ENCODE measurements at regions of chr3 and their contacts with region 1.

Region 1: GRCh38 chr3:31531992-31532586 is 636 bp upstream of the STT3B start:
- DNase-seq: peak; percentile 96 to 99 (median 98)
- ATAC-seq: peak; percentile 77 to 85
- H3K4me3 Mint-ChIP-seq: peak overlapping the region in 8 of 10 donors; percentile 90 to 100 (median 97)
- H3K27ac Mint-ChIP-seq: peak overlapping the region in 9 of 10 donors; percentile 95 to 99 (median 98)
- H3K4me1 Mint-ChIP-seq: peaks cover 5 to 28% (median 23%) of the 10 kb centered on the region in 4 donors
- H3K27me3 Mint-ChIP-seq: no peaks in the 10 kb centered on the region

Region 2: DNA sequence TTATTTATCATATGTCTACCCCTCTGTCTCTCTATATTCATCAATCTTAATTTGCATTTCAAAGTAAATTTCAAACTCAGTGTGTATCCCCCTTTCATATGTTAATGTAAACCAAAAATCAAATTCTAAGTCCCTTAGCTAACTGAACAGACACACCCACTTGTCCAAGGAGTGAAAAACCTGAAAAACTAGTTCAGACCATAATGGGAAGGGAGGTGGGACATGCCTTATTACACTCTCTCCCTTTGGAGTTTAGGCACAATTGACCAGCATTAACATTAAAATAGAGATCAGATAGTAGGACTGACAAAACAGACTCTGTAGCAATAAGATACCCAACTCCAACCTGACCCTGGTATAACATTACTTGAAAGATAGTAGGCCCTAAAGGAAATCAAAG is 390.0 kb before region 1 on chr3:
- POLR2A ChIA-PET with region 1: no interaction called
- DNase-seq: no peak
- ATAC-seq: no peak
- H3K4me3 Mint-ChIP-seq: no peak overlapping the region
- H3K27ac Mint-ChIP-seq: peak overlapping the region in 2 of 10 donors; percentile 5 to 6
- H3K4me1 Mint-ChIP-seq: no peaks in the 10 kb centered on the region
- H3K27me3 Mint-ChIP-seq: no peaks in the 10 kb centered on the region

Region 3: DNA sequence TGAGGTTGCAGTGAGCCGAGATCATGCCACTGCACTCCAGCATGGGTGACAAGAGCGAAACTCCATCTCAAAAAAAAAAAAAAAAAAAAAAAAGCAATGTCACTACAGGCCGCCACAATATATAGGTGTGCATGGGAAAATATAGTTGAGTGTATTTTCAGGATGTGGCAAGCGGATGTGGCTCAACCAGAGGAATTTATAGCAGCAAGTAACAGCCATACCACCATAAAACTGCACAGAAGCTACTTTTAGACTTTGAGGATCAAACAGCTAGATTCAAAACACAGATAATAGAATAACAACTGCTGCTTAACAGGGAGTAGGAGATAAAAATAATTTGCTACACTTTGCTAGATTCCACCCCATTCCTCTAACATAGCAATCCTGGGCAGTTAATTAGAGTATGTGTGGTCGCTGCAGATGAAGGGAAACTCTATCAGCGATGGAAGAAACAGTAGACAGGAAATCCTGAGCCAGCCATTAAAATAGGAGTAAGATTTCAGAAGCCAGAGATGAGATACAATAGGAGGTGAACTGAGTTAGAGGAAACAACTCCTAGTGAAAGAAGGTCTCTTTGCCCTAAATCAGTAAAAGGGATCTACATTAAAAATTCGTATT is 318.1 kb before region 1 on chr3:
- POLR2A ChIA-PET with region 1: interaction called, 16 read pairs
- DNase-seq: peak in 9 of 10 donors; percentile 7 to 77 (median 38)
- ATAC-seq: peak; percentile 88 to 90
- H3K4me3 Mint-ChIP-seq: peak overlapping the region; percentile 32 to 74 (median 64)
- H3K27ac Mint-ChIP-seq: peak overlapping the region in 8 of 10 donors; percentile 8 to 84 (median 54)
- H3K4me1 Mint-ChIP-seq: peaks cover 56 to 89% (median 87%) of the 10 kb centered on the region in 4 donors
- H3K27me3 Mint-ChIP-seq: no peaks in the 10 kb centered on the region

Region 4: GRCh38 chr3:31227131-31227562 is 304.9 kb before region 1 on chr3:
- POLR2A ChIA-PET with region 1: interaction called, 48 read pairs
- DNase-seq: peak in 5 of 10 donors; percentile 23 to 74 (median 42)
- ATAC-seq: peak; percentile 83
- H3K4me3 Mint-ChIP-seq: peak overlapping the region in 9 of 10 donors; percentile 54 to 83 (median 67)
- H3K27ac Mint-ChIP-seq: peak overlapping the region; percentile 77 to 97 (median 94)
- H3K4me1 Mint-ChIP-seq: peaks cover 44 to 95% (median 89%) of the 10 kb centered on the region in 4 donors
- H3K27me3 Mint-ChIP-seq: no peaks in the 10 kb centered on the region

Region 5: GRCh38 chr3:31462050-31462569 is 70.0 kb before region 1 on chr3:
- POLR2A ChIA-PET with region 1: interaction called, 108 read pairs
- DNase-seq: peak in 9 of 10 donors; percentile 22 to 89 (median 75)
- ATAC-seq: peak; percentile 87 to 93
- H3K4me3 Mint-ChIP-seq: peak overlapping the region; percentile 65 to 88 (median 74)
- H3K27ac Mint-ChIP-seq: peak overlapping the region; percentile 94 to 99 (median 96)
- H3K4me1 Mint-ChIP-seq: peaks cover 33 to 73% (median 64%) of the 10 kb centered on the region in 4 donors
- H3K27me3 Mint-ChIP-seq: no peaks in the 10 kb centered on the region

Region 6: DNA sequence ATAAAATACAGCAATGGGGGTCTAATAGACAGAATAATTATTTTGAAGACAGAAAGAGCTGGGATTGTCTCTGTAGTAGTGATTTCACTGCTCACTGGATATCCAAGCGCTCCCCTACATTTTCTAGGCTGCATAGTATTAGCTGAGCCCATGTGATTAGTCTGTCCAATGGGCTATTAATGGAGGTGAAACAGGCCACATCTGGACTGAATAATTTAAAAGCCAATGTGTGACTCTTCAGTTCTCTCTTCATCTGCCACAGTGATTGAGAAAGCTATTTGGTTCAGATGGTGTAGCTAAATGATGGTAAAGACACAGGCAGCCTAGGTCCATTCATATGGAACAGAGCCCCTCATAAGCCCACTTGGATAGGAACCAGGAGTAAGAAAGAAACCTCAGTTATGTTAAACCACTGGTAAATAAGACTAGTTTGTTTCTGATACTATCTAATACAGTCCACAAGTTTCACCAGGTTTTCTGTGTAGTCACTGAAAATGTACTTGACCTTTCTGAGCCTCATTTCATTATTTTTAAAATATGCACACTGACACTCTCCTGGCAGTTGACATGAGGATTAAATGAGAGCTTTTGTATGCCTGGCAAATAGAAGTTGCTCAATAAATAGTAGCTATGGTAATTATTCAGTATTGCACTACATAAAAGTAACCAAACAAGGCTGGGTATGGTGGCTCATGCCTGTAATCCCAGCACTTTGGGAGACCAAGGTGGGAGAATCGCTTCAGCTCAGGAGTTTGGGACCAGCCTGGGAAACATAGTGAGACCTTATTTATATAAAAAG is 16.4 kb before region 1 on chr3:
- POLR2A ChIA-PET with region 1: interaction called, 33 read pairs
- DNase-seq: no peak
- ATAC-seq: no peak
- H3K4me3 Mint-ChIP-seq: no peak overlapping the region
- H3K27ac Mint-ChIP-seq: no peak overlapping the region
- H3K4me1 Mint-ChIP-seq: no peaks in the 10 kb centered on the region
- H3K27me3 Mint-ChIP-seq: no peaks in the 10 kb centered on the region

Region 7: DNA sequence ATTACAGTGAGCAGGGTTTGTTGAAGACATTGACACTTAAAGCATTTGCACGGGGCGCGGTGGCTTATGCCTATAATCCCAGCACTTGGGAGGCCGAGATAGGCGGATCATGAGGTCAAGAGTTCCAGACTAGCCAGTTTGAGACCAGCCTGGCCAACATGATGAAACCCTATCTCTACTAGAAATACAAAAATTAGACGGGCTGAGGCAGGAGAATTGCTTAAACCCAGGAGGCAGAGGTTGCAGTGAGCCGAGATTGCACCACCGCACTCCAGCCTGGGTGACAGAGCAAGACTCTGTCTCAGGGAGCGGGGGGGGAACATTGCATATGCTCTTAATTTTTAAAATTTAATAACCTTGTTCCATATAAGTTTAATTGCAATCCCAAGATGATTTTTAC is 12.5 kb after region 1 on chr3:
- POLR2A ChIA-PET with region 1: interaction called, 23 read pairs
- DNase-seq: no peak
- ATAC-seq: no peak
- H3K4me3 Mint-ChIP-seq: peak overlapping the region; percentile 10 to 66 (median 48)
- H3K27ac Mint-ChIP-seq: peak overlapping the region in 8 of 10 donors; percentile 5 to 68 (median 44)
- H3K4me1 Mint-ChIP-seq: peaks cover 29 to 88% (median 80%) of the 10 kb centered on the region in 4 donors
- H3K27me3 Mint-ChIP-seq: no peaks in the 10 kb centered on the region

Region 8: GRCh38 chr3:31635545-31635944 is 103.5 kb after region 1 on chr3:
- POLR2A ChIA-PET with region 1: interaction called, 11 read pairs
- DNase-seq: no peak
- ATAC-seq: peak; percentile 20 to 33
- H3K4me3 Mint-ChIP-seq: peak overlapping the region in 7 of 10 donors; percentile 7 to 66 (median 43)
- H3K27ac Mint-ChIP-seq: peak overlapping the region; percentile 34 to 96 (median 83)
- H3K4me1 Mint-ChIP-seq: peaks cover 12 to 52% (median 47%) of the 10 kb centered on the region in 4 donors
- H3K27me3 Mint-ChIP-seq: no peaks in the 10 kb centered on the region